ENCODE measurements at regions of chr17 and their contacts with region 1.

Region 1: DNA sequence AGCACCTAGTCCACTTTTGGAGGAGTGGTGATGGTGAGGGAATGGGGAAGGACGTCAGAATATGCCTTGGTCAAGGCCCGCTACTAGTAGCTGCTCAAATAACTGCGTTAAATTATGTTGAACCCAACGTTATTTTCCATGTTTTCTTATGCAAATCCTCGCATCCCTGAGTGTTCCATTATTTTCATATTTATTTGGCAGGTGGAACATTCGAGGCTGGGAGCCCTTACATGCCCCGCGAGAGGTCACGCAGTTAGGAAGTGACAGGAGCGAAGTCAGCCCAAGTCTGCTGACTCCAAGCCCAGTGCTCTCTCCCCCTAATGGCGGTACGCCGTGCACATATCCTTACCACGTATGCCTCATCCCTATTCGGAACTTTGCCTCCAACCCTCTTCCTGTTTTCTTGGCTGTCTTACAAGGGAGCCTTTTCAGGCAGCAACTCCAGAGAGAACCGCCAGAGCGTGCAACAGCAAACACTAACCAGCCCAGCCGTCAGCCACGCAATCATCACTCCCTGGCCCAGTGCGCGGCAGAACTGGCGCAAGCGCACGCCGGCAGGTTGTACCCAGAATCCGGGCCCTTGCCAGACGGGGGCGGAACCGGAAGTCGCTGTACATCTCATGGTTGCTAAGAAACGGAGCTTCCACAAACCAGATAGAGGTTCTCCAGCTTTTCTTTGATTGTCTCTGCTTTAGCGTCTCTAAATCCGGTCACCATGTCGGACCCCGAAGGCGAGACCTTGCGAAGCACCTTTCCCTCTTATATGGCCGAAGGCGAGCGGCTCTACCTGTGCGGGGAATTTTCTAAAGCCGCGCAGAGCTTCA is at the start of gene ODAD4:
- DNase-seq: peak; percentile 98
- ATAC-seq: peak; percentile 99
- H3K4me3 Mint-ChIP-seq: peak within 1 kb of the TSS; percentile 93
- H3K27ac Mint-ChIP-seq: peak within 1 kb of the TSS; percentile 96
- H3K4me1 Mint-ChIP-seq: peaks cover 21% of the 10 kb centered on the region
- H3K27me3 Mint-ChIP-seq: peaks cover 1% of the 10 kb centered on the region
- CTCF ChIP-seq: peak; percentile 25
- total RNA-seq, gene ODAD4: 0.81 to 1.4 TPM

Region 2: GRCh38 chr17:41750862-41751261 is 179.4 kb before region 1 on chr17:
- CTCF ChIA-PET with region 1: no interaction called
- POLR2A ChIA-PET with region 1: no interaction called
- intact Hi-C with region 1: no loop called
- DNase-seq: no peak
- ATAC-seq: no peak
- H3K4me3 Mint-ChIP-seq: no peak overlapping the region
- H3K27ac Mint-ChIP-seq: no peak overlapping the region
- H3K4me1 Mint-ChIP-seq: no peaks in the 10 kb centered on the region
- H3K27me3 Mint-ChIP-seq: no peaks in the 10 kb centered on the region
- CTCF ChIP-seq: no peak

Region 3: GRCh38 chr17:41918314-41919164 is 11.7 kb before region 1 on chr17 and contains the start of gene ACLY:
- CTCF ChIA-PET with region 1: interaction called, 13 read pairs
- POLR2A ChIA-PET with region 1: interaction called, 40 read pairs
- intact Hi-C with region 1: no loop called
- DNase-seq: peak; percentile 97
- ATAC-seq: peak; percentile 99
- H3K4me3 Mint-ChIP-seq: peak within 1 kb of the TSS; percentile 95
- H3K27ac Mint-ChIP-seq: peak within 1 kb of the TSS; percentile 93
- H3K4me1 Mint-ChIP-seq: peaks cover 34% of the 10 kb centered on the region
- H3K27me3 Mint-ChIP-seq: no peaks in the 10 kb centered on the region
- CTCF ChIP-seq: no peak
- total RNA-seq, gene ACLY: 185 to 186 TPM

Region 4: DNA sequence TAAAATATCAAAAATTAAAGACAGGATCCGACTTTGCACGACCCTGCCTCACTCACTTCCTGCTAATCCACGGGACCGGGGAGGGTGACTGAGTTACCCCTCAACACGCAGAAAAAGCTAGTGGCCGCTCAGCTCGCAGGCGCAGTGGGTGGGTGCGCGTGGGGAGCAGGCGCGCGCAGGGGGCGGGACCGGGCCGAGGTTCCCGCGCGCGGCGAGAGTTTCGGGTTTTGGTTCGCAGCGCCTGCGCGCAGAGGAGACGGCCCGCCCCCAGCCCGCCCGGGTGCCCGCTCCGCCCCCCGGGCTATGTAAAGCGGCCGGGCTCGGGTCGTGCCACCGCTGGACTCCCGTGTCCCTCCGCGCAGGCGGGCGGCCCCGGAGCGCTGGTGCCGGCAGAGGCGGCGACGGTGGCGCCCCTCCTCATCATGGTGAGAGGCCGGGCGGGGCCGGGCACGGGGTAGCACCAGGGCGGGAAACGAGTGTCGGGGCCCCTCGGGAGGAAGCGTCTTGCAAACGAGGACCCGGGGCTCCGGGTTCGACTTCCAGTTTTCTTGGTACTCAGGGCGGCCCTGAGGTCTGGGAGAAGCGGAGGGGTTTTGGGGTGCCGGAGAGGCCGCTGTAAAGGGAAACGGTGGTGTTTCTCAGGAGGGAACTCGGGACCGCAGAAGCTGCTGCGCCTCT is 36.4 kb after region 1 on chr17 and contains the start of gene CNP:
- CTCF ChIA-PET with region 1: interaction called, 13 read pairs
- POLR2A ChIA-PET with region 1: interaction called, 5 read pairs
- intact Hi-C with region 1: no loop called
- DNase-seq: peak; percentile 92
- ATAC-seq: peak; percentile 82
- H3K4me3 Mint-ChIP-seq: peak within 1 kb of the TSS; percentile 82
- H3K27ac Mint-ChIP-seq: peak within 1 kb of the TSS; percentile 88
- H3K4me1 Mint-ChIP-seq: peaks cover 38% of the 10 kb centered on the region
- H3K27me3 Mint-ChIP-seq: no peaks in the 10 kb centered on the region
- CTCF ChIP-seq: no peak
- total RNA-seq, gene CNP: 50.1 to 54.5 TPM